ENCODE measurements at regions of chr7 and their contacts with region 1.

Region 1: DNA sequence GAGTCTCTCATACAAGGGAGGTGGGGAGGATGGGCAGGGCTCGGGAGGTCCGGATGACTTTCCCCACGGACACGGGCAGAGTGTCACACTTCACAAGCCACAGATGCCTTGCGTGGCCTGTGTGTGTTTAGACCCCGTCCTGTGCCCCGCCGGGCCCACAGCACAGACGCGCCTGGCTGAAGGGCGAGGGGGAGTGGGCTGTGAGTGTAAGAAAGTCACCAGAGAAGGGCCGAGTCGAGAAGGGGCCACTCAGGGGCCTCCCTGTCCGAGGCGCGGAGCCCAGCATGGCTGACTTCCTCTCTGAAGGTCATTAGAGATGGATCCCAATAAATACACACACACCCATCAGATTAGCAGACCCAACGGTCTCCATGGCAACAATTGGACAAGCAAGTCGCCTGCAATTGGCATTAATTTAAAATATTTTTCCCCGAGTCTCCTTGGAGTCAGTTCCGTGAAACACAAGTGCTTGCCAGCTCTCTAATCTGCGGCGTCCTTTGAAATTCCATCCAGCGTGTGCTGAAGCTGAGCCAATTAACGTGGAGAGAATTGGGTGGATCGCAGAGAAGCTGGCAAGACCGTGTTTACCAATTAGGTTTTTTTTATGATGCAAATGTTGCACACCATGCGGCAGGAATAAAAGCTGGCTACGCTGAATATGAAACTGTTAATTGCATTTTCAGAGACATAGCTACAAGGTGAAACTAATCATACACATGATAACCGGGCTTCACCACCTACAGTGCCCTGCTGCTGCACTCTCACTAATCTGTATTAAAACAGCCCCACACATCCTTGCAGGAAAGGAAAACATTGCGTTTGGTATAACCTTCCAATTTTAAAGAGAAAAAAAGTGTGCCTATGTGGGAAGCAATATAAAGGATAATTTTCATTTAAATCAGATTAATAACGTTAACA is 571.2 kb downstream of the PTPRN2 start:
- DNase-seq: peak in 1 of 5 donors; percentile 52
- ATAC-seq: peak in 2 of 4 donors; percentile 31 to 61
- H3K4me3 ChIP-seq: peak overlapping the region in 8 of 12 donors; percentile 1 to 42 (median 14)
- H3K27ac ChIP-seq: peak overlapping the region in 6 of 12 donors; percentile 25 to 57 (median 46)
- H3K4me1 ChIP-seq: peaks cover 0 to 25% (median 9%) of the 10 kb centered on the region in 12 donors
- H3K27me3 ChIP-seq: peaks cover 0 to 15% (median 0%) of the 10 kb centered on the region in 9 donors
- CTCF ChIP-seq: no peak
- POLR2A ChIP-seq: no peak

Region 2: DNA sequence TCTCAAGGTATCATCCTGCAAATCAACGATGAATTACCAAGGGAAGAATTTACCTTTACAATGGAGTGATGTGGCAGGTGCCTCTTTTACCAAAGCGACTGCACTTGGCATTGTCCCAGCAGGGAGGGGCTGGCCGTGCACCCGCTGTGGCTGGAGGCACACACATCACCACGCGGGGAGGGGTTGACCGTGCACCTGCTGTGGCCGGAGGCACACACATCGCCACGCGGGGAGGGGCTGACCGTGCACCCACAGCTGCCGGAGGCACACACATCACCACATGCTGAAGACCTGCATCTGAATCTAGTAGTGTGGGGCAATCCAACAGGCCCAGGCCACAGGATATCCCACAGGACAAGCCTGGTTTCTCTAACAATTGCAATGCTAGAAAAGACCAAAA is 186.1 kb before region 1 on chr7:
- intact Hi-C with region 1: no loop called
- DNase-seq: peak in 1 of 5 donors; percentile 14
- ATAC-seq: no peak
- H3K4me3 ChIP-seq: no peak overlapping the region
- H3K27ac ChIP-seq: no peak overlapping the region
- H3K4me1 ChIP-seq: no peaks in the 10 kb centered on the region
- H3K27me3 ChIP-seq: peaks cover 0 to 6% (median 0%) of the 10 kb centered on the region in 9 donors
- CTCF ChIP-seq: no peak
- POLR2A ChIP-seq: no peak

Region 3: DNA sequence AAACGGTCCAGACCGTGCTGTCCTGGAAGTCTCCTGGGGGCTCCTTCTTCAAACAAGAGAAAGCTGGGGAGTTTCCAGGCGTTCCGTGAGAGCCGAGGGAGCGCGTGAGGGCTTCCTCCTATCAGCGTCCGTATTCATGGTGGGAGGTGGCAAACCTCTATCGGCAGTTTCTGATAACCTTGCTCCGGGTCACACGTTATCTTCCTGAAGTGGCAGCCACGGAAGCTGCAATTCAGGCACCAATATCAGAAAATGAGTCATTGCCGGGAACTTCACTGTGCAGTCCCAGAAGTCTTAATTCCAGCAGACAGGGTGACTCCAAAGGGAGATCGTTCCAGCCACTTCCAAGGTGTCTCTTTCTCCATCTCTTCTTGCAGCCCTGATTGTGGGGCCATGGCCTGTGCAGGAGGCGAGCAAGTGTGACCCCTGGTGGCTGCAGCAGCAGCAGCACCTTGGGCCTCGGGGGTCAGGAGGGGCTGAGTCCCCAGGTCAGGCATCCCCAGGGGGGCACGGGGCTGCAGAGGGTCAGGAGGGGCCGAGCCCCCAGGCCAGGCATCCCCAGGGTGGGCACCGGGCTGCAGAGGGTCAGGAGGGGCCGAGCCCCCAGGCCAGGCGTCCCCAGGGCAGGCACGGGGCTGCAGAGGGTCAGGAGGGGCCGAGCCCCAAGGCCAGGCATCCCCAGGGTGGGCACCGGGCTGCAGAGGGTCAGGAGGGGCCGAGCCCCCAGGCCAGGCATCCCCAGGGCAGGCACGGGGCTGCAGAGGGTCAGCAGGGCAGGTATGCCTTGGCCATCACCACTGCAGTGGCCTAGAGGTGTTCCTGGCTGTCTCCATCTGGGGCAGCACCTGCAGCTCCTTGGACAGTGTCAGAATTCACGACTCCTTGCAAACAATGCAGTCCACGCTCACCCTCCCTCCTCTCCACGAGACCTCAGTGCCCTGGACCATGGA is 140.9 kb before region 1 on chr7:
- intact Hi-C with region 1: no loop called
- DNase-seq: peak in 2 of 5 donors; percentile 43 to 51
- ATAC-seq: peak in 3 of 4 donors; percentile 55 to 72 (median 58)
- H3K4me3 ChIP-seq: no peak overlapping the region
- H3K27ac ChIP-seq: no peak overlapping the region
- H3K4me1 ChIP-seq: peaks cover 0 to 9% (median 5%) of the 10 kb centered on the region in 12 donors
- H3K27me3 ChIP-seq: peaks cover 0 to 27% (median 4%) of the 10 kb centered on the region in 9 donors
- CTCF ChIP-seq: peak; percentile 51 to 69 (median 60)
- POLR2A ChIP-seq: no peak

Region 4: GRCh38 chr7:158325530-158326381 is 309.3 kb after region 1 on chr7:
- intact Hi-C with region 1: loop called in 1 of 10 experiments (anchors 10 kb)
- DNase-seq: no peak
- ATAC-seq: peak in 3 of 4 donors; percentile 42 to 55 (median 55)
- H3K4me3 ChIP-seq: no peak overlapping the region
- H3K27ac ChIP-seq: no peak overlapping the region
- H3K4me1 ChIP-seq: no peaks in the 10 kb centered on the region
- H3K27me3 ChIP-seq: peaks cover 0 to 42% (median 6%) of the 10 kb centered on the region in 9 donors
- CTCF ChIP-seq: peak in 10 of 12 donors; percentile 12 to 47 (median 23)
- POLR2A ChIP-seq: no peak